GM12878 (cell line): ENCODE measurements at regions of chr1 and their contacts with region 1.

Region 1: GRCh38 chr1:30372792-30373433 is 350.5 kb downstream of the MATN1 start:
- DNase-seq: no peak
- ATAC-seq: no peak
- H3K4me3 ChIP-seq: no peak overlapping the region
- H3K27ac ChIP-seq: no peak overlapping the region
- H3K4me1 ChIP-seq: no peaks in the 10 kb centered on the region
- H3K27me3 ChIP-seq: peaks cover 0 to 2% of the 10 kb centered on the region in 2 experiments; a peak in 1 of 4 replicates
- CTCF ChIP-seq: no peak
- EP300 ChIP-seq: no peak
- POLR2A ChIP-seq: no peak
- RAD21 ChIP-seq: no peak

Region 2: GRCh38 chr1:29453502-29454240 is 919.2 kb before region 1 on chr1:
- CTCF ChIA-PET with region 1: no interaction called
- POLR2A ChIA-PET with region 1: no interaction called
- RAD21 ChIA-PET with region 1: no interaction called
- SMC1A ChIA-PET with region 1: no interaction called
- in situ Hi-C with region 1: loop called (anchors 5 kb)
- intact Hi-C with region 1: no loop called
- DNase-seq: no peak
- ATAC-seq: peak; percentile 62
- H3K4me3 ChIP-seq: no peak overlapping the region
- H3K27ac ChIP-seq: no peak overlapping the region
- H3K4me1 ChIP-seq: no peaks in the 10 kb centered on the region
- H3K27me3 ChIP-seq: no peaks in the 10 kb centered on the region; a peak in 1 of 4 replicates
- CTCF ChIP-seq: peak; percentile 21 to 31 (median 26); a peak in 4 of 6 replicates
- EP300 ChIP-seq: no peak
- POLR2A ChIP-seq: no peak
- RAD21 ChIP-seq: no peak

Region 3: DNA sequence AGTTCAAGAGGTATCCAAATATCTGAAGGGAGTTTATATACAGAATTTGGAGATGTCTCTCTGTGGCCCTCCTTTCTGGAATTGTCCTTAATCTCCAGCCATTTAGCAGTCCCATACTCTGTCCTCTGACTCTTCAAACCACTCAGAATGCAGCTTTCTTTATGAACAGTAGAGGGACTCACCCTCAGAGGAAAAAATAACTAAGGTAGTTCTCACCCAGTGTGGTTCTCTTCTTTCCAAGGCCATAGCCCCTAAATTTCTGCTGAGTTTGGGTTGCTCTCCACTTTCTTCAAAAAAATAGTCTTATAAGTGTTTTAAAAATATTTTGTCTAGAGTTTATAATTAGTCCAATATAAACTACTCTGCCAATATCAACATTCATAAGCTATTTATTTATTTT is 19.3 kb before region 1 on chr1:
- CTCF ChIA-PET with region 1: no interaction called
- POLR2A ChIA-PET with region 1: no interaction called
- RAD21 ChIA-PET with region 1: no interaction called
- SMC1A ChIA-PET with region 1: no interaction called
- in situ Hi-C with region 1: no loop called
- intact Hi-C with region 1: no loop called
- DNase-seq: no peak
- ATAC-seq: no peak
- H3K4me3 ChIP-seq: no peak overlapping the region
- H3K27ac ChIP-seq: no peak overlapping the region
- H3K4me1 ChIP-seq: no peaks in the 10 kb centered on the region
- H3K27me3 ChIP-seq: no peaks in the 10 kb centered on the region; a peak in 1 of 4 replicates
- CTCF ChIP-seq: peak in 2 of 3 experiments; percentile 1 to 10; a peak in 1 of 6 replicates
- EP300 ChIP-seq: no peak
- POLR2A ChIP-seq: no peak
- RAD21 ChIP-seq: 0 out of 2 replicates have a peak, but pooled peaks have one; percentile 8